Activated CD4-positive, alpha-beta memory T cell treated with anti-CD3 and anti-CD28 coated beads for 36 hours (primary cell): ENCODE measurements at regions of chr4 and their contacts with region 1.

Region 1: GRCh38 chr4:113474017-113474416 is 287.5 kb downstream of the CAMK2D start:
- DNase-seq: peak; percentile 39
- H3K4me3 Mint-ChIP-seq: no peak overlapping the region
- H3K27ac Mint-ChIP-seq: peak overlapping the region; percentile 84
- H3K4me1 Mint-ChIP-seq: peaks cover 51% of the 10 kb centered on the region
- H3K27me3 Mint-ChIP-seq: no peaks in the 10 kb centered on the region

Region 2: GRCh38 chr4:113328514-113328913 is 145.5 kb before region 1 on chr4:
- CTCF ChIA-PET with region 1: no interaction called
- POLR2A ChIA-PET with region 1: no interaction called
- intact Hi-C with region 1: no loop called
- DNase-seq: peak; percentile 11
- H3K4me3 Mint-ChIP-seq: no peak overlapping the region
- H3K27ac Mint-ChIP-seq: no peak overlapping the region
- H3K4me1 Mint-ChIP-seq: no peaks in the 10 kb centered on the region
- H3K27me3 Mint-ChIP-seq: peaks cover 9% of the 10 kb centered on the region

Region 3: GRCh38 chr4:113445286-113445685 is 28.7 kb before region 1 on chr4:
- CTCF ChIA-PET with region 1: interaction called, 5 read pairs
- POLR2A ChIA-PET with region 1: interaction called, 4 read pairs
- intact Hi-C with region 1: loop called (anchors 1 kb)
- DNase-seq: peak; percentile 19
- H3K4me3 Mint-ChIP-seq: no peak overlapping the region
- H3K27ac Mint-ChIP-seq: peak overlapping the region; percentile 64
- H3K4me1 Mint-ChIP-seq: peaks cover 26% of the 10 kb centered on the region
- H3K27me3 Mint-ChIP-seq: no peaks in the 10 kb centered on the region

Region 4: DNA sequence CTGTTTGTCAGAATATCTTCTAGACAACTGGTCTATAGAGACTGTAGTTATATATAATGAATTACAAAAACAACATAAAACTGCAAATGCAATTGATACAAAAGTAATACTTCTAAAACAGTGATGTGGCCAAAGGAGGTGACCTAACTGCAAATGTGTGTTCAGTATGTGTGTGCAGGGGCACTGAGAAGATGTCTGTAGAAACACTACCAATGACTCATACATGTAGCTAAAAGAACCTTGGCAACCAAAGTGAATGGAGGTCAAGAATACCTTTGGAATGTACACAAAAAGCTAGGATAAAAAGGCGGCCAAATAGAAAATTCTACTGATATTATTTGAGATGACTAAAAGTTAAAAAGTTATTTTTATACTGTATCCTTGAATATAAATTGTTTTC is 25.7 kb after region 1 on chr4:
- CTCF ChIA-PET with region 1: no interaction called
- POLR2A ChIA-PET with region 1: no interaction called
- intact Hi-C with region 1: no loop called
- DNase-seq: no peak
- H3K4me3 Mint-ChIP-seq: no peak overlapping the region
- H3K27ac Mint-ChIP-seq: no peak overlapping the region
- H3K4me1 Mint-ChIP-seq: no peaks in the 10 kb centered on the region
- H3K27me3 Mint-ChIP-seq: no peaks in the 10 kb centered on the region

Region 5: DNA sequence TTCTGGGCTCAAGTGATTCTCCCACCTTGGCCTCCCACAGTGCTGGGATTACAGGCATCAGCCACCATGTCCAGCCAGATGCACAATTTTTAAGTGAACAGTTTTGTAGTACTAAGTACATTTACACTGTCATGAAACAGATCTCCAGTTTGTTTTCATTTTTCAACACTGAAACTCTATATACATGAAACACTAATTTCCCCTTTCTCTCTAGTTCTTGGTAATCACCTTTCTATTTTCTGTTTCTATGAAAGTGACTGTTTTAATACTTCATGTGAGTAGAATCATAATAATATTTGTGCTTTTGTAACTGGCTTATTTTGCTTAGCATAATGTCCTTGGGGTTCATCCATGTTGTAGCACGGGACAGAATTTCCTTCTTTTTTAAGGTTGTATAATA is 50.1 kb after region 1 on chr4:
- CTCF ChIA-PET with region 1: no interaction called
- POLR2A ChIA-PET with region 1: no interaction called
- intact Hi-C with region 1: loop called (anchors 1 kb)
- DNase-seq: no peak
- H3K4me3 Mint-ChIP-seq: no peak overlapping the region
- H3K27ac Mint-ChIP-seq: no peak overlapping the region
- H3K4me1 Mint-ChIP-seq: peaks cover 13% of the 10 kb centered on the region
- H3K27me3 Mint-ChIP-seq: no peaks in the 10 kb centered on the region